BJ (cell line): ENCODE measurements at regions of chr21 and their contacts with region 1.

Region 1: GRCh38 chr21:46173573-46173972 is 10.7 kb downstream of the SPATC1L start:
- DNase-seq: no peak
- H3K4me3 ChIP-seq: no peak overlapping the region
- H3K27me3 ChIP-seq: no peaks in the 10 kb centered on the region
- CTCF ChIP-seq: no peak

Region 2: GRCh38 chr21:45747802-45748445 is 425.6 kb before region 1 on chr21:
- CTCF ChIA-PET with region 1: no interaction called
- POLR2A ChIA-PET with region 1: no interaction called
- DNase-seq: no peak
- H3K4me3 ChIP-seq: no peak overlapping the region
- H3K27me3 ChIP-seq: no peaks in the 10 kb centered on the region
- CTCF ChIP-seq: no peak

Region 3: GRCh38 chr21:46136739-46137349 is 36.7 kb before region 1 on chr21:
- CTCF ChIA-PET with region 1: no interaction called
- POLR2A ChIA-PET with region 1: no interaction called
- DNase-seq: no peak
- H3K4me3 ChIP-seq: no peak overlapping the region
- H3K27me3 ChIP-seq: peaks cover 4% of the 10 kb centered on the region
- CTCF ChIP-seq: no peak

Region 4: GRCh38 chr21:46221664-46222435 is 48.3 kb after region 1 on chr21:
- CTCF ChIA-PET with region 1: no interaction called
- POLR2A ChIA-PET with region 1: interaction called, 11 read pairs
- DNase-seq: no peak
- H3K4me3 ChIP-seq: no peak overlapping the region
- H3K27me3 ChIP-seq: no peaks in the 10 kb centered on the region
- CTCF ChIP-seq: no peak